ENCODE measurements at regions of chrX and their contacts with region 1.

Region 1: DNA sequence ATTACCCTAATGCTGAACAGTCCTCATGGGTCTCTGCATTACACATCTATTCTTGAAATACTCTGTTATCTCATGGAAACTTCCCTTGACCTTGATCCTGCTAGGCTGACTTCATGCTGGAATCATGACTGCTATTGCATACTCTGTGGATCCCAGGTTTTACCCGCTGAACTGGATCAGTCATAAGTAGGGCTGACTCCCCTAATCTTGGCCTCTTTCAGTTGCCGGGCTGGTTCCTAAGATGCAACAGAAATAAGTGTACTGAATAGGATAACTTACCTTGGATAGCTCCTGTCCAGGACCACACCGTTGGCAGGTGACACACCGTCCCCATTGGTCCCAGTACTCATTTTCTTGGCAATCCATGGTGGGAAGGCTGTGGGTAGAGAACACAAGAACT is 23.2 kb downstream of the EDA2R start:
- DNase-seq: no peak
- H3K4me3 ChIP-seq: no peak overlapping the region
- H3K27ac ChIP-seq: no peak overlapping the region
- H3K4me1 ChIP-seq: no peaks in the 10 kb centered on the region
- H3K27me3 ChIP-seq: no peaks in the 10 kb centered on the region
- CTCF ChIP-seq: no peak
- EP300 ChIP-seq: no peak
- POLR2A ChIP-seq: no peak

Region 2: GRCh38 chrX:66553973-66554372 is 61.7 kb before region 1 on chrX:
- intact Hi-C with region 1: loop called (anchors 10 kb)
- DNase-seq: no peak
- H3K4me3 ChIP-seq: no peak overlapping the region
- H3K27ac ChIP-seq: no peak overlapping the region
- H3K4me1 ChIP-seq: no peaks in the 10 kb centered on the region
- H3K27me3 ChIP-seq: peaks cover 0 to 4% (median 0%) of the 10 kb centered on the region in 3 donors
- CTCF ChIP-seq: no peak
- EP300 ChIP-seq: no peak
- POLR2A ChIP-seq: no peak

Measured in stomach (tissue), 19 donors.